Activated CD4-positive, alpha-beta T cell treated with anti-CD3 and anti-CD28 coated beads for 36 hours (primary cell): ENCODE measurements at regions of chr20 and their contacts with region 1.

Region 1: GRCh38 chr20:24100385-24101011 is 111.9 kb upstream of the GGTLC1 start:
- DNase-seq: peak; percentile 75
- ATAC-seq: peak; percentile 90
- H3K4me3 Mint-ChIP-seq: no peak overlapping the region
- H3K27ac Mint-ChIP-seq: peak overlapping the region; percentile 21
- H3K4me1 Mint-ChIP-seq: peaks cover 26% of the 10 kb centered on the region
- H3K27me3 Mint-ChIP-seq: peaks cover 2% of the 10 kb centered on the region

Region 2: DNA sequence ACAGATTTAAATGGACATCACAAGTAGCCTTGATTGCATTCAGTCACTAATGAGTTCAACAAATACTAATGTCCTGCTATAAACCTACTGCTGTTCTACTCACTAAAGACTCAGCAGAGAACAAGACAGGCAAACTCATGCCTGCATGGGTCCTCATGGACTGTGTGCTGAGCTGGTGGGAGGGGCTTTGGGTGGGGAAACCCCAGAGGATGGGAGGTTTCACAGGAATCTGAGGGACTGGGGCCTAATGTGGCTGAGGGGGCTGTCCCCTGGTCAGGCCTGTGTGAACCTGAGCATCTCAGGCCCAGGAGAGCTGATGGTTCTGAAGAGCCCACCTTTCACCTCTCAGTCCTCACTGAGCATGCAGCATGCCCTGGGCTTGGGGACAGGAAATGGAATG is 608.2 kb before region 1 on chr20:
- CTCF ChIA-PET with region 1: no interaction called
- POLR2A ChIA-PET with region 1: no interaction called
- intact Hi-C with region 1: no loop called
- DNase-seq: peak; percentile 39
- ATAC-seq: peak; percentile 66
- H3K4me3 Mint-ChIP-seq: no peak overlapping the region
- H3K27ac Mint-ChIP-seq: no peak overlapping the region
- H3K4me1 Mint-ChIP-seq: peaks cover 7% of the 10 kb centered on the region
- H3K27me3 Mint-ChIP-seq: peaks cover 10% of the 10 kb centered on the region

Region 3: GRCh38 chr20:23889775-23890211 is 210.7 kb before region 1 on chr20:
- CTCF ChIA-PET with region 1: no interaction called
- POLR2A ChIA-PET with region 1: no interaction called
- intact Hi-C with region 1: loop called (anchors 5 kb)
- DNase-seq: peak; percentile 86
- ATAC-seq: peak; percentile 99
- H3K4me3 Mint-ChIP-seq: no peak overlapping the region
- H3K27ac Mint-ChIP-seq: no peak overlapping the region
- H3K4me1 Mint-ChIP-seq: peaks cover 3% of the 10 kb centered on the region
- H3K27me3 Mint-ChIP-seq: no peaks in the 10 kb centered on the region

Region 4: GRCh38 chr20:23995905-23996666 is 104.4 kb before region 1 on chr20:
- CTCF ChIA-PET with region 1: interaction called, 5 read pairs
- POLR2A ChIA-PET with region 1: no interaction called
- intact Hi-C with region 1: loop called in 1 of 2 experiments (anchors 2 kb)
- DNase-seq: peak; percentile 75
- ATAC-seq: no peak
- H3K4me3 Mint-ChIP-seq: no peak overlapping the region
- H3K27ac Mint-ChIP-seq: no peak overlapping the region
- H3K4me1 Mint-ChIP-seq: no peaks in the 10 kb centered on the region
- H3K27me3 Mint-ChIP-seq: no peaks in the 10 kb centered on the region

Region 5: DNA sequence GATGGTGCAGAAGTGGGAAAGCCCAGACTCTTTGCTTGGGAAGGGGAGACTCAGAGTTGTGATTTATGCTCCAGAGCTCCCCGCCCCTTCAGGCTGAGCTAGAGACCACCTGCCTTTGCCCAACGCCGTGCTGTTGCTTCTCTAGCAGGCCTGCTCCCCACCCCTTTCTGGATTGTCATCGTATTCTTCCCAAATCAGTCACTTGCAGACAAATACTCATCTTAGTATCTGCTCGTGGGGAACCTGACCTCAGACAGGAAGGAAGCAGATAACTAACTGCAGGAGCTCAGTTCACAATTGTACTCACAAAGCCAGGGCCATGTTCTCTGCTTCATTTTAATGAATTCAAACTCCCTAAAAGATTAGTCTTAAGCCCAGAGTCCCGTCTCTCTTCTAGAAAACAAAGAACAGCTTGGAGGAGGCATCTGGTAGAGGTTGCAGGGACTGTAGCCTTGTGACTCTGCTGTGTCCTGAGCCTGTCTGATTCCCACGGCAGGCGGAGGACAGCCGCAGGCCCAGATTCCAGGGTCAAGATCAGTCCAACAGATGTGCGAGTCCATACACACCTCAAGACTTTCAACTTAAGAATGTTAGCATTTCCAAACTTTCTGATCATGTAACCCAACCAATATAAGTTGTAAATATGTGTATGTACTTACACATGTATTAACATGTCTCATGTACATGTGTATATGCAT is 54.7 kb before region 1 on chr20:
- CTCF ChIA-PET with region 1: interaction called, 4 read pairs
- POLR2A ChIA-PET with region 1: no interaction called
- intact Hi-C with region 1: loop called in 1 of 2 experiments (anchors 1 kb)
- DNase-seq: peak; percentile 66
- ATAC-seq: peak; percentile 87
- H3K4me3 Mint-ChIP-seq: no peak overlapping the region
- H3K27ac Mint-ChIP-seq: peak overlapping the region; percentile 75
- H3K4me1 Mint-ChIP-seq: peaks cover 51% of the 10 kb centered on the region
- H3K27me3 Mint-ChIP-seq: no peaks in the 10 kb centered on the region

Region 6: GRCh38 chr20:24133628-24134027 is 33.1 kb after region 1 on chr20:
- CTCF ChIA-PET with region 1: no interaction called
- POLR2A ChIA-PET with region 1: no interaction called
- intact Hi-C with region 1: no loop called
- DNase-seq: no peak
- ATAC-seq: no peak
- H3K4me3 Mint-ChIP-seq: no peak overlapping the region
- H3K27ac Mint-ChIP-seq: no peak overlapping the region
- H3K4me1 Mint-ChIP-seq: peaks cover 6% of the 10 kb centered on the region
- H3K27me3 Mint-ChIP-seq: no peaks in the 10 kb centered on the region

Region 7: DNA sequence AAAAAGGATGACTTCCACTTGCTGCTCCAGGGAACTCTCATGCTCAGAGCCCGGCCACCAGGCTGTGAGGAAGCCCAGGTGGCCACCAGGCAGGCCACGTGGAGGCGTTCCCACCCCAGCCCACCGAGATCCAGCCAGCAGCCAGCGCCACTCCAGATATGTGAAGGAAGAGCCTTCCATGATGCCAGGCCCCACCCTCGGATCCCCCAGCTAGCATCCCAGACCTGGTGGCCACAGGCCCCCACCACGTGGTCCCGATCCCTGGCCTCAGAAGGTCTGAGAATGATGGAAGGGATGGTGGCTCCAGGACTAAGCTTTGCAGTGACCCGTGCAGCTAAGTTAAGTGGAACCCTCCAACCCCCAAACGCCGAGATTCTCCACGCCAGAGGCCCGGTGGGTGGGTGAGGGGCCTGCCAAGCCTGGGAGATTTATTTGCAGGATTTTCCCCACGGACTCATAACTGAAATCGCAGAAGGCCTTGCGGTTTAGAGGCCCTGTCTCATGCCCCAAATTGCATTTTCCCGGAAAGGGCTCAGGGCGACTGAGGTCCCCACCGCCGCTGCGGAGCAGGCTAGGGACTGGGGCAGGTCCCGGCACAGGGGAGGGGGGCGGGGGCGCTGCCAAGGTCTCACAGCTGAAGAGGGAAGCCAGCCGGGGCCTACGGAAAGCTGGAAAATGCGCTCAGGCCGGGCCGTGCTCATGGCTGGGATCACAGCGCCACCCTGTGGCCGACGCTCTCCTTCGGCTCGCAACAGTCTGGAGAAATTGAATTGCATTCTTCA is 817.5 kb after region 1 on chr20:
- CTCF ChIA-PET with region 1: interaction called, 3 read pairs
- POLR2A ChIA-PET with region 1: no interaction called
- intact Hi-C with region 1: loop called in 1 of 2 experiments (anchors 5 kb)
- DNase-seq: peak; percentile 75
- ATAC-seq: peak; percentile 76
- H3K4me3 Mint-ChIP-seq: no peak overlapping the region
- H3K27ac Mint-ChIP-seq: no peak overlapping the region
- H3K4me1 Mint-ChIP-seq: peaks cover 6% of the 10 kb centered on the region
- H3K27me3 Mint-ChIP-seq: peaks cover 2% of the 10 kb centered on the region